ENCODE measurements at regions of chr6 and their contacts with region 1.

Region 1: GRCh38 chr6:7292596-7293255 is 20.3 kb downstream of the SSR1 start:
- DNase-seq: no peak
- ATAC-seq: no peak

Region 2: GRCh38 chr6:7446619-7447325 is 154.0 kb after region 1 on chr6:
- intact Hi-C with region 1: no loop called
- DNase-seq: no peak
- ATAC-seq: peak; percentile 83

Region 3: DNA sequence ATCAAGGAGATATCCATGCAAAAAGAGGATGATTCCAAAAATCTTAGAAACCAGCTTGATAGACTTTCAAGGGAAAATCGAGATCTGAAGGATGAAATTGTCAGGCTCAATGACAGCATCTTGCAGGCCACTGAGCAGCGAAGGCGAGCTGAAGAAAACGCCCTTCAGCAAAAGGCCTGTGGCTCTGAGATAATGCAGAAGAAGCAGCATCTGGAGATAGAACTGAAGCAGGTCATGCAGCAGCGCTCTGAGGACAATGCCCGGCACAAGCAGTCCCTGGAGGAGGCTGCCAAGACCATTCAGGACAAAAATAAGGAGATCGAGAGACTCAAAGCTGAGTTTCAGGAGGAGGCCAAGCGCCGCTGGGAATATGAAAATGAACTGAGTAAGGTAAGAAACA is 287.1 kb after region 1 on chr6:
- intact Hi-C with region 1: loop called (anchors 10 kb)
- DNase-seq: no peak
- ATAC-seq: no peak

Measured in Right ventricle myocardium superior (tissue), 1 donor.